ENCODE measurements at regions of chr17 and their contacts with region 1.

Region 1: GRCh38 chr17:39209317-39210092 is 9.4 kb downstream of the RPL19 start:
- DNase-seq: peak; percentile 70
- H3K4me3 ChIP-seq: peak overlapping the region; percentile 51
- H3K27ac ChIP-seq: peak overlapping the region; percentile 93
- H3K4me1 ChIP-seq: peaks cover 50% of the 10 kb centered on the region
- CTCF ChIP-seq: 0 out of 2 replicates have a peak, but pooled peaks have one; percentile 22

Region 2: DNA sequence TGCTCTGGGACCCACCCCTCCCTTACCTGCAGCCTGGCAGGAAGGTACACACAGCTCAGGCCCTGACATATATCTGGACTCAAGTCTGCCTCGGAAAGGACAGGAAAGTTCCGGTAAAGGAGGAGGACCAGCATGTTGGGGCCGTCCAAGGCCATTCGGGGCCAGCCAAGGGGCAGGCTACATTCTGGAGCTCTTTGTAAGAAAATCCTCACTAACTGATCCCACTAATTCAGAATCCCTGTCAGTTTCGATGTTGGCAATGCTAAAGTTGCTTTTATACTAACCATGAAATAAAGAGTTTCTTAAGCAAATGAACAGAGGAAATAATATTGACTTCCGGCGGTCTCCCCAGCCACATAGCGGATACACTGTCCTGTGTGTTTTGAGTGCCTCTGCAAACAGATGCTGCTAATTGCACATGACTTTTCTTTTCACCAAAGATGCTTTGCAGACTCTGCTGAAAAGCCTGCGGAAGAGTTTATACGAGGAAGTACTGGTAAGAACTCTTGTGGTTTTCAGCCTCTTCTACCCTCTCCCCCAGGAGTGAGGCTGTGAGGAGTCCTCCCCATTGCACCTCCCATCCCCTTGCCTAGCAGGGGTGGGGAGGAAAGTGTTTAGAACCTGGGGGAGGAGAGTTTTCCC is 112.9 kb before region 1 on chr17:
- CTCF ChIA-PET with region 1: no interaction called
- POLR2A ChIA-PET with region 1: no interaction called
- intact Hi-C with region 1: no loop called
- DNase-seq: peak; percentile 37
- H3K4me3 ChIP-seq: no peak overlapping the region
- H3K27ac ChIP-seq: no peak overlapping the region
- H3K4me1 ChIP-seq: peaks cover 64% of the 10 kb centered on the region
- CTCF ChIP-seq: no peak

Region 3: DNA sequence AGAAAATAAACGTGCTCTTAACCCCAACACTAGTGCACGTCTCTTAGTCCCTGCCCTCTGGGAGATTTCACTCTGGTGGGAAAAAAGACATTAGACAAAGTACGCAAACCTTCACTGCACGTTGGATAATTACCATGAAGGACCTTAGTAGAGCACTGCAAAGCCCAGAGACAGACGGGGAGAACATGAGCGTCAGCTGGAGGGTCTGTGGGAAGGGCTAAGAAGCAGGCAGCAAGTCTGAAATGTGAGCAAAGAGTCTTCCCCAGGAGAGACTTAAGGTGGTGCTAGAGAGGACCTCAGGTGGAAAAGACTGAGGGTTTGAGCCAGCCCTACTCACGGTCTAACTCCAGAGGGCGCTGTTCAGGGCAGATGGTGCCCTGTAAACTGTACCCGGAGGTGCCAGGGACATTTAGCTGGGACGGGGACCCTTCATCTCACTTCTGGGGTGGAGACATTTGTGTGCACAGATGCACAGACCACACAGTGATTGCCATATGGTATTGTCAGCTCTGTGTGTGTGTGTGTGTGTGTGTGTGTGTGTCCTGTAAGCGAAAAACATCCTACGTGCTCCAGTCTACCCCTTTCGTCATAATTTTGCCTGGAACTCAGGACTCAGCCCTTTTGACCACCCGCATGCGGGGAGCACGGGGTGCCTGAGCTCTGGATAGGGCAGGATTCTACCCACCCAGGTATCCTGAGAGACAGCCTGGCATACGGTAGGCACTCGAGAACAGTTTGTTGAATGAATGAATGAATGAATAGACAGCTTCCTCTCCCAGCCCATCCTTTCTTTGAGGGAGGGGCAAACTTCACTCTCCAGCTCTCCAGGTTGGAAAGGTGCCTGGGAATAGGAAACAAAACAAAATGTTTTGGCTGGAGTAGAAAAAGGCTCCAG is 26.3 kb after region 1 on chr17:
- CTCF ChIA-PET with region 1: interaction called, 45 read pairs
- POLR2A ChIA-PET with region 1: interaction called, 23 read pairs
- intact Hi-C with region 1: loop called (anchors 1 kb)
- DNase-seq: peak; percentile 86
- H3K4me3 ChIP-seq: no peak overlapping the region
- H3K27ac ChIP-seq: no peak overlapping the region
- H3K4me1 ChIP-seq: peaks cover 67% of the 10 kb centered on the region
- CTCF ChIP-seq: peak; percentile 99

Region 4: DNA sequence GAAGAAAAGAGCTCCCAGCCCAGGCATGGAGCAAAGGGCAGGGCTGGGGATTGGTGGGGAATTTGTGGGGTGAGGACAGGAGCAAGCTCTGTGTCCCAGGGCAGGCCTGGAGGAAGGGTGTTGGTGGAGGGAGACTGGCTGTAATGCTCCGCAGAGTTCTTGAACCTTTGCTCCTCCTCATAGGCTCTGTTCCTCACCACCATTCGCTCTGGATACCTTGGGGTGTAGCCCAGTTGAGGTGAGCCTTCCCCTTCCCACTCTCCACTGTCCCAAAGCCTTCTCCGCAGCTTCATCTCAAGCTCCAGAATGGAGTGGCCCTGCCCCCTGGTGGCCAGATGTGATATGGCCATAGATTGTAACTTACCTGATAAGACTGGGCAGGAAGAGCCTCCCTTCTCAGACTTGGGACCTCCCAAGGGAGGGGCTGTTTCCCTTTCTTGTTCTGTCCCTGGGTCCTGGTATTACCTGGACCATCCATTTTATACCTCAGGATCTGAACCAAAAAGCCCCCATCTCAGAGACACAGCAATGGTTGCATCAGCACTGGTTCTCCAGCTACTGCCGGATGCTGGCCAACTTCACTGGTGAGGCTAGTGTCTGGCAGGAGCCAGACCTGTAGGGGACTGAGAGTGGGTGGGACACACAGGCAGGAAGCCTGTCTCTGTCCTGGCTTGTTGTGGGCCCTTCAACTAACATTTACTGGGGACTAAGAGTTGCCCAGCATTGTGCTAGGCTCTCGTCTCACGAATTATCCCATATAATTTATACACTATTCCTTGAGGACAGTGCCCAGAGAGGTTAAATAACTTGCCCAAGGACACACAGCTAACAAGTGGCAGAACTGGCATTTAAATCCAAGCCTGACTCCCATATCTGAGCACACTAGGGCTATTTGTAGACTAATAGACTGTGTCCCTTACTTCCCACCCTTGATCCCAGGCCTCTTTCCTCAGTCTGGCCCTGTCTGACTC is 35.4 kb after region 1 on chr17:
- CTCF ChIA-PET with region 1: interaction called, 45 read pairs
- POLR2A ChIA-PET with region 1: interaction called, 18 read pairs
- intact Hi-C with region 1: loop called (anchors 1 kb)
- DNase-seq: peak; percentile 90
- H3K4me3 ChIP-seq: peak overlapping the region; percentile 23
- H3K27ac ChIP-seq: peak overlapping the region; percentile 59
- H3K4me1 ChIP-seq: peaks cover 53% of the 10 kb centered on the region
- CTCF ChIP-seq: peak; percentile 97

Region 5: DNA sequence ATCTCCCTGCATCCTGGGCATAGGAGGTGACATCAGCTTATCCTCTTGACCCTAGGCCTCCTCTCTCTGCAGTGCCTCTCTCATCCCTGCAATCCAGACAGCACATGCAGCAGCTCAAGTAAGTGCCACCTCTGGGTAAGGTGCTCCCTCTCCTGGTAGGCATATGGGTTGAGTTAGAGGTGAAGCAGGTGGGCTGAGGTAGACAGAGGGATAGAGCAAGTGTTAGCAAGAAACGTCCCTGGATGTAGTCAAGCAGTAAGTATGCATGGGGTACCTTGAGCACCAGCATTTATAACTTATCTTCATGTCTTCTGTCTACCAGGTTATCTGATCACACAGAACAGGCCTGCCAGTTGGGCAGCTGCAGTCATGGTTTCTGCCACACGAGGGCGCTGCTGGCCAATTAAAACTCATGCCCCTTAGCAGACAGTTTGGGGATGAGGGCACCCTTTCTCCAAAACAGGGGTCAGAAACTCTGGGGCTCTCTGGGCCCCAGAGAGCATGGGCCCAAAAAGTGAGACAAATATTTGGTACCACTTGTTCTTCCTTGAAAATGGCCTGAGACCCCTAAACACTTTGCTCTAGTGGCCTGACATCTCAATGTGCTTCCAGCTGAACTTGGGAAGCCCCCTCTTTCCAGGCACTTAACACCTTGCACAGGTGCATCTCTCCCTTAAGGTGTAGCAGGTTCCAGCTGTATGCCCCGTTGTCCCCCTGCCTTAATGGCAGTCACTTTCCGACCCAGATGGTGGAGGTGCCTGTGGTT is 338.4 kb after region 1 on chr17:
- CTCF ChIA-PET with region 1: no interaction called
- POLR2A ChIA-PET with region 1: no interaction called
- intact Hi-C with region 1: loop called (anchors 5 kb)
- DNase-seq: peak; percentile 63
- H3K4me3 ChIP-seq: no peak overlapping the region
- H3K27ac ChIP-seq: no peak overlapping the region
- H3K4me1 ChIP-seq: peaks cover 8% of the 10 kb centered on the region
- CTCF ChIP-seq: peak; percentile 100

Measured in OCI-LY7 (cell line).